ENCODE measurements at regions of chr9 and their contacts with region 1.

Region 1: GRCh38 chr9:133023117-133023890 is 7.5 kb upstream of the GTF3C5 start:
- H3K4me3 ChIP-seq: no peak overlapping the region
- H3K27ac ChIP-seq: no peak overlapping the region
- H3K4me1 ChIP-seq: no peaks in the 10 kb centered on the region
- CTCF ChIP-seq: no peak

Region 2: DNA sequence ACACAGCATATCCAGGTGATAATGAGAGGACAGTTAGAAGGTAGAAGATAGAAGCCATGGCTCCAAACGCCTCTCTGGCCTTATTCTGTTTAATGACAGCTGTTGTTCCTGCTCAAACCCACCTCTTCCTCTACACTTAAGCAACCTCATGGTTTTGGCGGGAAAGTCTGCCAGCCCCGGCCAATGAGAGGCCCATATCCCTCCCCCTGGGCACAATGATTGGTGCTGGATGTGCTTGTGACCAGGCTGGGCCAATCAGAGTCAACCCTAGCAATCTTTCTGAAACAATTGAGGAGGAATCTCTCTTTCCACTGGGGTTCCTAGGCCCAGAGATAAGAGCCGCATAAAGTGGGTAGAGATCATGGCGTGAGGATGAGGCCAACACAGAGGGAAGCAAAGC is 49.6 kb before region 1 on chr9:
- CTCF ChIA-PET with region 1: interaction called, 30 read pairs
- POLR2A ChIA-PET with region 1: no interaction called
- H3K4me3 ChIP-seq: no peak overlapping the region
- H3K27ac ChIP-seq: no peak overlapping the region
- H3K4me1 ChIP-seq: no peaks in the 10 kb centered on the region
- CTCF ChIP-seq: no peak

Region 3: DNA sequence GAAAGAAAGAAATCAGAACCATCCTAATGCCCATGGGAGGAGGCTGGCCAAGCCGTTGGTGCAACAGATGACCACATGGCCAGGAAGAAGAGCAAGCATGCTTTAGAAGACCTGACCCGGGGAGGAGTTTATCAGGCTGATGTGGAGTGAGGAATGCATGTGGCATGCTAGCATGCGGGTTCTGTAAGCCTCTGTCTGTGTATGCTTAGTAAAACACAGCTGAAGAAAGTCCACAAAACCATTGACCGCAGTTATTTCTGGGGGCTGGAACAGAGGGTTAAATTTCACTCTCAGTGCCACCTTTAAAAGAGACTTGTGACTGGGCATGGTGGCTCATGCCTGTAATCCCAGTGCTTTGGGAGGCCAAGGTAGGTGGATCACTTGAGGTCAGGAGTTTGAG is 25.7 kb before region 1 on chr9:
- CTCF ChIA-PET with region 1: interaction called, 56 read pairs
- POLR2A ChIA-PET with region 1: interaction called, 3 read pairs
- H3K4me3 ChIP-seq: no peak overlapping the region
- H3K27ac ChIP-seq: no peak overlapping the region
- H3K4me1 ChIP-seq: no peaks in the 10 kb centered on the region
- CTCF ChIP-seq: no peak

Region 4: GRCh38 chr9:133009906-133010582 is 13.3 kb before region 1 on chr9:
- CTCF ChIA-PET with region 1: interaction called, 96 read pairs
- POLR2A ChIA-PET with region 1: no interaction called
- H3K4me3 ChIP-seq: no peak overlapping the region
- H3K27ac ChIP-seq: no peak overlapping the region
- H3K4me1 ChIP-seq: no peaks in the 10 kb centered on the region
- CTCF ChIP-seq: no peak

Region 5: DNA sequence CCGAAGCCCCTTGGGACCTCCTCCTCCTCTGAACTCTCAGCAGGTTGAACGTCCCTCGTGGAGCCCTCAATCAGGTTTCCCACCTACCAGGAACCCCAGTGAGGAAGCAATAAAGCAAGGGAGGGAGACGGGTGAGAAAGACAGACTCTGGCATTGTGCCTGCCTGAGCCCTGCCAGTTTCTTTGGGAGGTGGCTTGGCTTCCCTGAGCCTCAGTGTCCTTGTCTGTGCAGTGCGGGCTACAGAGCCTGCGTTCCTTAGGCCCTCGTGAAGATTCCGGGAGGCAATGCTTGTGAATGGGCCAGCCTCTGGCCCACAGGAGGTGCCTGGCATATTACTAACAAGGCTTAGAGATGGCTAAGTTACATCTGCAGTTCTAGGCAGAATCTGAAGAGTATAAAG is 19.4 kb after region 1 on chr9:
- CTCF ChIA-PET with region 1: interaction called, 32 read pairs
- POLR2A ChIA-PET with region 1: no interaction called
- H3K4me3 ChIP-seq: no peak overlapping the region
- H3K27ac ChIP-seq: no peak overlapping the region
- H3K4me1 ChIP-seq: no peaks in the 10 kb centered on the region
- CTCF ChIP-seq: no peak

Region 6: GRCh38 chr9:133144137-133144903 is 121.0 kb after region 1 on chr9:
- CTCF ChIA-PET with region 1: interaction called, 25 read pairs
- POLR2A ChIA-PET with region 1: interaction called, 3 read pairs
- H3K4me3 ChIP-seq: peak overlapping the region; percentile 23
- H3K27ac ChIP-seq: no peak overlapping the region; the same call in 1 of the 2 replicates
- H3K4me1 ChIP-seq: peaks cover 3% of the 10 kb centered on the region; the same call in 1 of the 2 replicates
- CTCF ChIP-seq: peak; percentile 99

Region 7: DNA sequence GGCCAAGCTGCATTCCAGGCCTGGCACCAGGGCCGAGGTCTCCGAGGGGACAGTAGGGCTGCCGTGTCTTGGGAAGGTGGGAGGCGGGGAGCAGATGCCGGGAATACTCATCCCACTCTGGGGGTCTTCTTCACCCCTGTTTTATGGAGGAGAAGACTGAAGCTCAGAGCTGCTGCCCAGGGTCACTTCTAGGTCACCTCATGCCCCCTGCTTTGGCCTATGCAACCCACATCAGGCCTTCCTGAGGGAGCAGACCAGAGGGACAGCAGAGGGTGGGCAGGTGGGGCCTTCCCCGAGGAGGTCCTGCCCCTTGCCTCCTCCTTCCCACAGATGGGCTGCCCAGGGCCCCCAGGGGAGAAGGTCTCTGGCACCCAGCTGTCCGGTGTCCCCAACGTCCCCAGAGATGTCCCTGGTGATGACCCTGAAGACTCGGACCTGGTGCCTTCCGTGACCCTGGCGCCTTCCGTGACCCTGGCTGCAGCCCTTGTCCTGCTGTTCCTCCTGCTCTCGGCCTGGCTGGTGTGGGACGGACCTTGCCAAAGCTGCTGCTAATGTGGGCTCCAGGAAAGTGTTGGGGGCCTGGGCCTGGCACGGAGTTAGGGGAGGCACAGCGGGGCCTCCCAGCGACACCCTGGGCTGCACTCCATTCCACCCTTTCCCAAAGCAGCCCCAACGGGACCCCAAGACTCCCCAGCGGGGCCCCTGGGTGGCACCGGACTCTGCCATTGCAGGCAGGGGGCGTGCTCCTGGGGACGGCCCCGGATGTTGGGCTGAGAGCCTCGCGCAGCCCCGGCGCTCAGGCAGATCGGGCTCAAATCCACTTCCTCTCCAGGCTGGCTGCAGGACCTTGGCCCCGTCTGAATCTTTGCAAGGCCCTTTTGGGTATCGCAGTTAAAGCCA is 462.3 kb after region 1 on chr9:
- CTCF ChIA-PET with region 1: interaction called, 21 read pairs
- POLR2A ChIA-PET with region 1: no interaction called
- H3K4me3 ChIP-seq: no peak overlapping the region
- H3K27ac ChIP-seq: no peak overlapping the region
- H3K4me1 ChIP-seq: no peaks in the 10 kb centered on the region
- CTCF ChIP-seq: no peak

Measured in HEK293 (cell line).